ENCODE measurements at regions of chr1 and their contacts with region 1.

Region 1: GRCh38 chr1:48741395-48741794 is 35.3 kb downstream of the BEND5 start:
- DNase-seq: no peak
- H3K4me3 ChIP-seq: no peak overlapping the region
- H3K27ac ChIP-seq: peak overlapping the region; percentile 64 to 69
- H3K4me1 ChIP-seq: peaks cover 0 to 5% of the 10 kb centered on the region in 2 donors
- H3K27me3 ChIP-seq: no peaks in the 10 kb centered on the region
- CTCF ChIP-seq: no peak

Region 2: DNA sequence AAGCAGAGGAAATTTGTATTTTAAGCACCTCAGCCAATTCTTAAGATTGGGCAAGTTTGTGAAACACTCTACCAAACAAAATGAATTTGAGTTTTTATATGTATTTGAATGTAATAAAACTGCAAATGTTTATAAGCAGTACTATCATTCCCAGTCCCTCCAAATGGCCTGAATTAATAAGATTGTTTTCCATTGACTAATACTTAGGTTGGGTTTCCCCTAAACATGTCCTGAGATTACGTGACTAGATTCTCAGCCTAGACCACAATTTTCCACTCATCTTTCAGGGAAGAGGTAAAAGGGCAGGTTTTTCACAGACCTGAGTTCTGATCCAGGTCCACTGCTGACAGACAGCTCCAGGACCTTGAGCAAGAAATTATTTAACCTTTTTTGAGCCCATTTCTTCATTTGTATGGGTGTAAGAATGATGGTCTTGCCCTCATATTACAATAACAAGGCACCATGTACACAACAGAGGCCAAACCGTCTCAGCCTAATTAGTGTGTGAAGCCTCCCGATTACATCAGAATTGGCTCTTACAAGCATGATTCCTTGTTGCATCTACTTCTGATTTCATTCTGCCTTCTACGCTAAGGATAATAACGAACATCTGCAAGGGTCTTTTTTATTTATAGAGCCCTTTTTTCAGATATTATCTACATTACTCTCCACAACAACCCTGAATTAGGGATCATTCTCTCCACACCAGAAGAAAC is 15.9 kb before region 1 on chr1:
- intact Hi-C with region 1: no loop called
- DNase-seq: no peak
- H3K4me3 ChIP-seq: no peak overlapping the region
- H3K27ac ChIP-seq: no peak overlapping the region
- H3K4me1 ChIP-seq: no peaks in the 10 kb centered on the region
- H3K27me3 ChIP-seq: no peaks in the 10 kb centered on the region
- CTCF ChIP-seq: no peak

Region 3: GRCh38 chr1:48776393-48777218 is 35.2 kb after region 1 on chr1 and contains the start of gene BEND5:
- intact Hi-C with region 1: loop called (anchors 5 kb)
- DNase-seq: peak in 1 of 2 donors; percentile 73
- H3K4me3 ChIP-seq: peak within 1 kb of the TSS; percentile 72 to 98
- H3K27ac ChIP-seq: peak within 1 kb of the TSS; percentile 90 to 98
- H3K4me1 ChIP-seq: peaks cover 0 to 20% of the 10 kb centered on the region in 2 donors
- H3K27me3 ChIP-seq: no peaks in the 10 kb centered on the region
- CTCF ChIP-seq: no peak
- total RNA-seq, gene BEND5: 3.4 TPM